ENCODE measurements at regions of chr11 and their contacts with region 1.

Region 1: DNA sequence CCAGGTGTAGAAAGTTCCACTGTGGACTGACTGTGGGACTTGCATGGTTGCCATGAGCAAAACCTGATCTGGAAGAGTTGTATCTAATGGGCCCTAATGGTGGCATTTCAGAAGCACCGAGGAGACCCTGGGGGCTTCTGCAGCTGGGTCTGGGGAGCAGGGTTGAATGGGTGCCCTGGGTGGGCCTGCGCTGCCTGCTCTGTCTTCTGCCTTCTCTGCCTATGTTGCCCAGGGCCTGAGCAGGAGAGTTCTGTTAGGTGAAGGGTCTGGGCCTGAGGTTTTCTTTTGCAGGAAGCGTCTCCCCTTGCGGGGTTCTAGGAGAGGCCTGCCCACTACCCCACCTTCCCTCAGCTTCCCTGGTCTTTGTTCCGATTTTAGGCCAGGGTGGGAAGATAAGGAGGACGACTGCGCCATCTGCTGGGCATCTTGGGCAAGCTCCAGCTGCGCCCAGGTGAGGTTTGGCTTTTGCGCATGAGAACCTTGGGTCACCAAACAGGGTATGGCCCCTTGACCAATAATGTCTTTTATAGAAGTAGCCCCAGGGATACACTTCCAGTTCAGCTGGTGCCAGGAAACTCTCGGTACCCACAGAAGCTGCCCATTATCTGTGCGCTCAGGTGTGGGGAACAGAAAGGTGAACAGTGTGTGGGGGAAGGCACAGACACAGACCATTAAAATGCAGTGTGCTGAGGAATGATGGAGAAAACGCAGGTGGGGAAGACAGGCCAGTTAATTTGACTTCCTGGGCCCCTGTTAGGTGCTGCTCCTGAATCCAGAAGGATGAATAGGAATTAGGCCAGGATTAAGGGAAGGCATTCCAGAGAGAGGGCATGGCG is 23.2 kb downstream of the COMMD9 start:
- ATAC-seq: peak; percentile 71 to 93 (median 88)
- H3K4me3 ChIP-seq: no peak overlapping the region
- H3K27ac ChIP-seq: no peak overlapping the region
- H3K4me1 ChIP-seq: peaks cover 9 to 11% of the 10 kb centered on the region in 2 donors

Region 2: GRCh38 chr11:35485656-35486322 is 780.2 kb before region 1 on chr11:
- in situ Hi-C with region 1: loop called in 1 of 9 experiments (anchors 25 kb)
- ATAC-seq: peak; percentile 97 to 100 (median 100)
- H3K4me3 ChIP-seq: no peak overlapping the region
- H3K27ac ChIP-seq: no peak overlapping the region
- H3K4me1 ChIP-seq: no peaks in the 10 kb centered on the region

Region 3: GRCh38 chr11:35605711-35606110 is 660.3 kb before region 1 on chr11:
- in situ Hi-C with region 1: loop called in 7 of 9 experiments (anchors 10 to 25 kb)
- ATAC-seq: peak; percentile 64 to 96 (median 92)
- H3K4me3 ChIP-seq: no peak overlapping the region
- H3K27ac ChIP-seq: peak overlapping the region in 1 of 2 donors; percentile 14
- H3K4me1 ChIP-seq: peaks cover 25 to 27% of the 10 kb centered on the region in 2 donors

Region 4: DNA sequence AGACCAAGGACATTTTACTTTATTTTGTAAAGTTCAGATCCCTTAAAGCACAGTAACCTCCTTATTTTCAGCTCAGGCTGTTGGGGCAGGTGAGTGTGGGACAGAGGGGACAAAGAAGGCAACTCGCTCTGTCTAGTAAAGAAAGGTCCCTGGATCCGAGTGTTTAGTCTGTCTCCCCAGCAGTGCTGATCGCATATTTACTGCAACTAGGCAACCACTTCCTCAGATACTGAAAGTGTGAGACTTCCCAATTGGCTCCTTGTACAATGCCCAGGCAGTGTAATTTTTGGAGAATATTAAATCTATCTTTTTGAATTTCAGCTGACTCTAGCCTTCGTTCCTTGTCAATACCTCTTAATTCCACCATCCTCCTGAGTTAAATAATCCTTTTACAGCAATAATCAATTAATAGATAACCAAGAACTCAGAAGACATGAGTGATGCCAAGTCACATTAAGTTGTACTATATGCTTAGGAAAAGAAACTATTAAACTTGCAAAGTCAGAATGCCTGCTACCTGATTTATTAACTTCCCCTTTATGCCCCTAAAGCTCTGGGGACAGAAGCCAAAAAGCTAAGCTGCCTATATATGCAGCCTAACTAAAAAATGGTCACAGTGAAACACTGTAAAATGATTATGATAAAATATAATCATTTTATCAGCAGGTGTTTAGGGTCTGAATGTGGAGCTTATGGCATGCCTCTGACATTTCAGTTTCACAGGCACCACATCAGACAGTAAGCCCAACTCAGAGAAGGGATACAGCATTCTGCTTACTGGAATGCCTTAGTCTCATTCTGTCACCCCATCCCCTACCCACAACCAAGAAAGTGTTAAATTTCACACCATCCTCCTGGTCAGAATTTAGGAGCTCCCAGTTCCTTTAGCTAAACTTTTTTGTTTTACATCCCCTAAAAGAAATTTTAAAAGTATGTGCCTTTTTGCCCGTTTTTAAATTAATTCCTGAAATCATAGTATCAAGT is 464.7 kb before region 1 on chr11:
- in situ Hi-C with region 1: loop called in 2 of 9 experiments (anchors 25 kb)
- ATAC-seq: peak in 1 of 8 experiments; percentile 93
- H3K4me3 ChIP-seq: no peak overlapping the region
- H3K27ac ChIP-seq: no peak overlapping the region
- H3K4me1 ChIP-seq: peaks cover 0 to 10% of the 10 kb centered on the region in 2 donors

Region 5: GRCh38 chr11:36041988-36042611 is 223.9 kb before region 1 on chr11:
- in situ Hi-C with region 1: loop called in 2 of 9 experiments (anchors 25 kb)
- ATAC-seq: peak in 2 of 8 experiments; percentile 28 to 31
- H3K4me3 ChIP-seq: no peak overlapping the region
- H3K27ac ChIP-seq: no peak overlapping the region
- H3K4me1 ChIP-seq: peaks cover 0 to 5% of the 10 kb centered on the region in 2 donors

Region 6: GRCh38 chr11:36149538-36150242 is 116.3 kb before region 1 on chr11:
- in situ Hi-C with region 1: loop called in 1 of 9 experiments (anchors 25 kb)
- ATAC-seq: peak; percentile 93 to 98 (median 96)
- H3K4me3 ChIP-seq: no peak overlapping the region
- H3K27ac ChIP-seq: peak overlapping the region in 1 of 2 donors; percentile 69
- H3K4me1 ChIP-seq: peaks cover 25 to 42% of the 10 kb centered on the region in 2 donors

Region 7: GRCh38 chr11:36417154-36417553 is 151.1 kb after region 1 on chr11:
- in situ Hi-C with region 1: no loop called
- ATAC-seq: no peak
- H3K4me3 ChIP-seq: no peak overlapping the region
- H3K27ac ChIP-seq: no peak overlapping the region
- H3K4me1 ChIP-seq: peaks cover 10 to 11% of the 10 kb centered on the region in 2 donors

Region 8: GRCh38 chr11:36586543-36586942 is 320.5 kb after region 1 on chr11:
- in situ Hi-C with region 1: no loop called
- ATAC-seq: no peak
- H3K4me3 ChIP-seq: no peak overlapping the region
- H3K27ac ChIP-seq: no peak overlapping the region
- H3K4me1 ChIP-seq: no peaks in the 10 kb centered on the region